WTC11 (cell line): ENCODE measurements at regions of chrX and their contacts with region 1.

Region 1: DNA sequence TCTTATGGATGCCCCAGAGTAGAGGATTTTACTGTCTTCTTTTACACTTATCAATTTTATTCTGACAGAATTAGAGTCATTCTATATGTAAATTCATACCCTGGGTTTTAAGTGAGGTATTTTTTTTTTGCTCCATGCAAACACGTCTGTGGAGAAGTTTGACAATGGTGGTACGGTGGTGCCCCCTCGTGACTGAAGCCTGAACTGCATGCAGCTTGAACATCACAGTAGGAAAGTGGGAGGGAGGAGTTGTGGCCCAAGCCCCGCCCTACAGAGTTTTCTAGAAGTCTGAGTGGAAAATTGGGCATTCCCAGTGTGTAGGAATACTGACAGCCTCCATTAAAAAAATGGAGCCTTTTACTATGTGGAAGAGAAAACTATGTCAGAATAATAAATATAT is 73.3 kb upstream of the RAB40AL start:
- DNase-seq: peak; percentile 82
- ATAC-seq: peak; percentile 68
- H3K4me3 Mint-ChIP-seq: no peak overlapping the region
- H3K27ac Mint-ChIP-seq: no peak overlapping the region
- H3K4me1 Mint-ChIP-seq: peaks cover 4% of the 10 kb centered on the region
- H3K27me3 Mint-ChIP-seq: no peaks in the 10 kb centered on the region
- CTCF ChIP-seq: peak; percentile 67

Region 2: GRCh38 chrX:102835504-102836146 is 28.1 kb before region 1 on chrX:
- CTCF ChIA-PET with region 1: interaction called, 11 read pairs
- POLR2A ChIA-PET with region 1: no interaction called
- DNase-seq: peak; percentile 33
- ATAC-seq: peak; percentile 93
- H3K4me3 Mint-ChIP-seq: no peak overlapping the region
- H3K27ac Mint-ChIP-seq: peak overlapping the region; percentile 49; the same call in 1 of the 2 replicates
- H3K4me1 Mint-ChIP-seq: peaks cover 3% of the 10 kb centered on the region; the same call in 1 of the 2 replicates
- H3K27me3 Mint-ChIP-seq: no peaks in the 10 kb centered on the region
- CTCF ChIP-seq: no peak